ENCODE measurements at regions of chr13 and their contacts with region 1.

Region 1: DNA sequence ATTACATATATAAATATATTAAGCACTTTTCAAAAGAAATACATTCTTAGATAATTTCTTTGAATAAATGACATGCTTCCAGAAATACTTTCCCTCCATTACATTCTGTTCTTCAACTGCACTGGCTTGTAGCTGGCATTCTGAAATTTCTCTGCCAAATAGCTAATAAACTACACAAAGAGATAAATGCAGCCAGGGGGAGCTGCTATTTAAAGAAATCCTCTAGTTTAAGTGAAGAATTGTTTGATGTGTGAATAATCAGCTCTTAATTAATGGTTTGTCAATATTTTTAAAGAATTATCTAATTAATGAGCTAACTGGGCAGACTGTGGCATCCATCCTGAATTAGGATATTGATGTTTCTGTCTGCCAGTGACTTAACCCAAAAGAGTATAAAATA is 30.7 kb downstream of the SLC7A1 start:
- DNase-seq: no peak
- H3K4me3 ChIP-seq: no peak overlapping the region
- H3K4me3 Mint-ChIP-seq: no peak overlapping the region
- H3K27ac ChIP-seq: no peak overlapping the region
- H3K27ac Mint-ChIP-seq: peak overlapping the region in 4 of 7 donors; percentile 4 to 43 (median 24)
- H3K4me1 ChIP-seq: peaks cover 16% of the 10 kb centered on the region
- H3K4me1 Mint-ChIP-seq: peaks cover 28 to 72% (median 42%) of the 10 kb centered on the region in 4 donors
- H3K27me3 ChIP-seq: no peaks in the 10 kb centered on the region
- H3K27me3 Mint-ChIP-seq: no peaks in the 10 kb centered on the region

Region 2: GRCh38 chr13:29577136-29578051 is 12.6 kb after region 1 on chr13:
- CTCF ChIA-PET with region 1: interaction called, 10 read pairs
- POLR2A ChIA-PET with region 1: no interaction called
- intact Hi-C with region 1: no loop called
- DNase-seq: no peak
- H3K4me3 ChIP-seq: no peak overlapping the region
- H3K4me3 Mint-ChIP-seq: no peak overlapping the region
- H3K27ac ChIP-seq: no peak overlapping the region
- H3K27ac Mint-ChIP-seq: no peak overlapping the region
- H3K4me1 ChIP-seq: no peaks in the 10 kb centered on the region
- H3K4me1 Mint-ChIP-seq: peaks cover 22 to 72% (median 38%) of the 10 kb centered on the region in 4 donors
- H3K27me3 ChIP-seq: no peaks in the 10 kb centered on the region
- H3K27me3 Mint-ChIP-seq: no peaks in the 10 kb centered on the region

Region 3: DNA sequence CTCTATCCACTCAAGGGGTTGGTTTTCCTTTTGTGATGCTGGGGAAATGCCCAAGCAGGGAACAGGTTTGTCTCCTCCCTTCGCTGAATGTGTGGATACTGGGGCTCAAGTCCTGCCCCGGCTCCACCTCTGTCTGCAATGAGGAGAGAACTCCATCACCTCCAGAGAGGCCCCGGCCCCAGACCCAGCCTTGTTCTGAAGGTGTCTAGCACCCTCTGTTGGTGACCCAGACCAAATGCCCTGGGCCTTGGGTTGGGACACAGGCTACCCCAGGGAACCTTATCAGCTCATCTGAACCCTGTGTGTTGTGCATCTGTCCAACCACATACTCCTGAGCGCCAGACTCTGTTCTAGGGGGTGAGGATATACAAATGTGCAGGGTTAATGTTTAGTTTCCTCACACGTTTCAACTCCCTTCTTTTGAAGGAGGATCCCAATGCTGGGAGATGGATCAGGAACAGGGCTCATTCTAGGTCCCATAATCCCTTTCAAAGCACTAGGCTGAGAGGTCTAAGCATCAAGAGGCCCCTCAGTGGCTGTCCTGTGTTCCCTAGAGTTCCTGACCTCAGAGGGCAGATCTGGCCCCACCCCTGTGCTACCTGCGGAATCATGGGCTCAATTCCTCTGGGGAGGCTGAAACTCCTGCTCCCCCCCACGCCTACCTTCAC is 143.2 kb after region 1 on chr13:
- CTCF ChIA-PET with region 1: interaction called, 20 read pairs
- POLR2A ChIA-PET with region 1: no interaction called
- intact Hi-C with region 1: no loop called
- DNase-seq: peak in 4 of 5 donors; percentile 24 to 41 (median 30)
- H3K4me3 ChIP-seq: no peak overlapping the region
- H3K4me3 Mint-ChIP-seq: no peak overlapping the region
- H3K27ac ChIP-seq: no peak overlapping the region
- H3K27ac Mint-ChIP-seq: no peak overlapping the region
- H3K4me1 ChIP-seq: no peaks in the 10 kb centered on the region
- H3K4me1 Mint-ChIP-seq: peaks cover 0 to 4% (median 0%) of the 10 kb centered on the region in 4 donors
- H3K27me3 ChIP-seq: no peaks in the 10 kb centered on the region
- H3K27me3 Mint-ChIP-seq: peaks cover 12 to 17% of the 10 kb centered on the region in 2 donors

Region 4: GRCh38 chr13:29743201-29743786 is 178.5 kb after region 1 on chr13:
- CTCF ChIA-PET with region 1: no interaction called
- POLR2A ChIA-PET with region 1: no interaction called
- intact Hi-C with region 1: no loop called
- DNase-seq: no peak
- H3K4me3 ChIP-seq: no peak overlapping the region
- H3K4me3 Mint-ChIP-seq: no peak overlapping the region
- H3K27ac ChIP-seq: no peak overlapping the region
- H3K27ac Mint-ChIP-seq: no peak overlapping the region
- H3K4me1 ChIP-seq: no peaks in the 10 kb centered on the region
- H3K4me1 Mint-ChIP-seq: no peaks in the 10 kb centered on the region
- H3K27me3 ChIP-seq: no peaks in the 10 kb centered on the region
- H3K27me3 Mint-ChIP-seq: peaks cover 2 to 6% of the 10 kb centered on the region in 2 donors

Measured in CD4-positive, alpha-beta memory T cell (primary cell).